ENCODE measurements at regions of chr17 and their contacts with region 1.

Region 1: DNA sequence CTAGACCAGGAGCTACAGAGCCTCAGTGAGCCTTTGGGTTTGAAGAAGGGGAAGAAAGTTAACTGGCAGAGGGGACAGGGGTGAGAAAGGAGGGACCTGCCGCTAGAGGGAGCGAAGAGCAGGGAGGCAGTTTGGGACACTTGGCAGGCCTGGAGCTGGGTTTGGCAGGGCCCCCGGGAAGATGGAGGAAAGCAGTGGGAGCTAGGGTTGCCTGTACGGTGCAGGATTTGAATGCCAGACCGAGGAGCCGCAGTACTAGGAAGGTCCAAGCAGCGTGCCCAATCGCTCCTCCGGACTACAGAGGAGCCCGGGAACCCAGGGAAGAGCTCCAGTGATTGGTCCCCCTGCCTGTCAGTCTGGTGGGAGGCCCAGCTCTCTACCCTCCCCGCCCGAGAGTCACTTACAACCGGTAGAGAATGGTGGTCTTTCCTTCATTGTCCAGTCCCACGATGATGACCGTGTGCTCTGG is 1.3 kb downstream of the ARL5C start:
- DNase-seq: peak; percentile 91
- H3K27ac ChIP-seq: no peak overlapping the region
- CTCF ChIP-seq: peak; percentile 73

Region 2: GRCh38 chr17:39153599-39154051 is 11.1 kb before region 1 on chr17:
- CTCF ChIA-PET with region 1: interaction called, 10 read pairs
- POLR2A ChIA-PET with region 1: no interaction called
- DNase-seq: peak; percentile 84
- H3K27ac ChIP-seq: peak overlapping the region; percentile 90
- CTCF ChIP-seq: no peak

Region 3: DNA sequence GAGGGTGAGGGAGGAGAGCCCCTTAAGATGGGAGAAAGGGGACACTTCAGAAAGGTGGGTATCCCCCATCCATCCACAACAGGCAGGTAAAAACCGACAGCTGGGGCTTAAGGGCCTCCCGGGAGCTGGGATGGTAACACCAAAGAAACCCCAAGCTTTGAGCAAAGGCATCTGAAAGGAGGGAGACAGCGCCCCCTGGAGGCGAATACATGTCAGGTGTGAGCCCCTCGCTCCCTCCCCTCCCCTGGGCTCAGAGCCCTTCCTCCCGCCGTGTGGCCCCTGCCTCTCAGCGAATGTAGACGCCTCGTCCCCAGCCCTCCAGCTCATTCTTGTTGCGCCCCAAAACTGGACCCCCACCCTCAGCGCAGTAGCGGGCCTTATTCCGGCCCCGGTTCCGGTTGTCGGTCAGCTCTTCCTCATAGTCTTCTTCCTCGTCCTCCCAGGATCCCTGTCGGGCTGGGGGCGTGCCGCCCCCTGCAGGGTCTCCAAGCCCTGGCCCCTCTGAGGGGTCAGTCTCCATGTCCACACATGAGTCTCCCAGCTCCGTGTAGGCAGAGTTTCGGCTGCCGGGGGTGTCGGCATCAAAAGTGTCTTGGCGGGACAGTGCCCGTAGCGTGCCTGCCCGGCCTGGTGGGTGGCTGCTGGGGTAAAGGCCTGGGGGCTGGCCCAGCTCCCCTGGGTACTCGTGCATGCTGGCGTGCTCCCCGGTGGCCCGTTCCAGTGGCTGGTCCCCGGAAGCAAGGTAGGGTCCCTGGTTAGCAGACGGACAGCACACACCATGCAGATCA is 10.4 kb after region 1 on chr17:
- CTCF ChIA-PET with region 1: interaction called, 38 read pairs
- POLR2A ChIA-PET with region 1: no interaction called
- DNase-seq: no peak
- H3K27ac ChIP-seq: peak overlapping the region; percentile 23; the same call in 1 of the 2 replicates
- CTCF ChIP-seq: peak; percentile 73

Region 4: DNA sequence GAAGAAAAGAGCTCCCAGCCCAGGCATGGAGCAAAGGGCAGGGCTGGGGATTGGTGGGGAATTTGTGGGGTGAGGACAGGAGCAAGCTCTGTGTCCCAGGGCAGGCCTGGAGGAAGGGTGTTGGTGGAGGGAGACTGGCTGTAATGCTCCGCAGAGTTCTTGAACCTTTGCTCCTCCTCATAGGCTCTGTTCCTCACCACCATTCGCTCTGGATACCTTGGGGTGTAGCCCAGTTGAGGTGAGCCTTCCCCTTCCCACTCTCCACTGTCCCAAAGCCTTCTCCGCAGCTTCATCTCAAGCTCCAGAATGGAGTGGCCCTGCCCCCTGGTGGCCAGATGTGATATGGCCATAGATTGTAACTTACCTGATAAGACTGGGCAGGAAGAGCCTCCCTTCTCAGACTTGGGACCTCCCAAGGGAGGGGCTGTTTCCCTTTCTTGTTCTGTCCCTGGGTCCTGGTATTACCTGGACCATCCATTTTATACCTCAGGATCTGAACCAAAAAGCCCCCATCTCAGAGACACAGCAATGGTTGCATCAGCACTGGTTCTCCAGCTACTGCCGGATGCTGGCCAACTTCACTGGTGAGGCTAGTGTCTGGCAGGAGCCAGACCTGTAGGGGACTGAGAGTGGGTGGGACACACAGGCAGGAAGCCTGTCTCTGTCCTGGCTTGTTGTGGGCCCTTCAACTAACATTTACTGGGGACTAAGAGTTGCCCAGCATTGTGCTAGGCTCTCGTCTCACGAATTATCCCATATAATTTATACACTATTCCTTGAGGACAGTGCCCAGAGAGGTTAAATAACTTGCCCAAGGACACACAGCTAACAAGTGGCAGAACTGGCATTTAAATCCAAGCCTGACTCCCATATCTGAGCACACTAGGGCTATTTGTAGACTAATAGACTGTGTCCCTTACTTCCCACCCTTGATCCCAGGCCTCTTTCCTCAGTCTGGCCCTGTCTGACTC is 80.2 kb after region 1 on chr17:
- CTCF ChIA-PET with region 1: interaction called, 14 read pairs
- POLR2A ChIA-PET with region 1: no interaction called
- DNase-seq: peak; percentile 81
- H3K27ac ChIP-seq: peak overlapping the region; percentile 35
- CTCF ChIP-seq: peak; percentile 91

Region 5: GRCh38 chr17:39335704-39336223 is 171.1 kb after region 1 on chr17:
- CTCF ChIA-PET with region 1: no interaction called
- POLR2A ChIA-PET with region 1: no interaction called
- DNase-seq: no peak
- H3K27ac ChIP-seq: no peak overlapping the region
- CTCF ChIP-seq: no peak

Region 6: DNA sequence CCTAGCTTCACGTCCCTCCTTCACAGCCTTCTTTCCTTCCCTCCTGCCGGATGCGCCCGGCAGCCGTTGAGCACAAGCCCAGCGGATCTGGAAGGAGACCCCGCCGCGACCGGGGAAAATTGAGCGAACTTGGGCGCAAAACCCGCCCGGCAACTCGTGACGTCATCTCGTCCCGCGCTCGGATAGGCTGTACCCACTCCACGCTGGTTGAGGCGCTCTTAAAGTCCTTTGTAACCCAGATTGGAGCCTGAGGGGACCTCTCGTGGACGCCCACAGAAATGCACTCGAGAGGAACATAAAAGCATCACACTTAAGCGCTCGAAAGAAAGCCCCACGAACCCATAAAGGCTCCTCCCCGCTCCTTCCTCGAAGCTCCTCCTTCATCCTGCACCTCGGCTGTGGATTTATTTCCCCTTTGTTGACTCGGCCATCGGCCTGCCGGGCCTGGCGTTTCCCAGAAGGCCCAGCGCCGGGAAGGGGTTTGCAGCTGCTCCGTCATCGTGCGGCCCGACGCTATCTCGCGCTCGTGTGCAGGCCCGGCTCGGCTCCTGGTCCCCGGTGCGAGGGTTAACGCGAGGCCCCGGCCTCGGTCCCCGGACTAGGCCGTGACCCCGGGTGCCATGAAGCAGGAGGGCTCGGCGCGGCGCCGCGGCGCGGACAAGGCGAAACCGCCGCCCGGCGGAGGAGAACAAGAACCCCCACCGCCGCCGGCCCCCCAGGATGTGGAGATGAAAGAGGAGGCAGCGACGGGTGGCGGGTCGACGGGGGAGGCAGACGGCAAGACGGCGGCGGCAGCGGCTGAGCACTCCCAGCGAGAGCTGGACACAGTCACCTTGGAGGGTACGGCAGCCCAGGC is 815.9 kb after region 1 on chr17 and contains the start of gene PSMD3:
- CTCF ChIA-PET with region 1: no interaction called
- POLR2A ChIA-PET with region 1: interaction called, 13 read pairs
- DNase-seq: peak; percentile 95
- H3K27ac ChIP-seq: peak within 1 kb of the TSS; percentile 88
- CTCF ChIP-seq: peak; percentile 79